ENCODE measurements at regions of chr17 and their contacts with region 1.

Region 1: DNA sequence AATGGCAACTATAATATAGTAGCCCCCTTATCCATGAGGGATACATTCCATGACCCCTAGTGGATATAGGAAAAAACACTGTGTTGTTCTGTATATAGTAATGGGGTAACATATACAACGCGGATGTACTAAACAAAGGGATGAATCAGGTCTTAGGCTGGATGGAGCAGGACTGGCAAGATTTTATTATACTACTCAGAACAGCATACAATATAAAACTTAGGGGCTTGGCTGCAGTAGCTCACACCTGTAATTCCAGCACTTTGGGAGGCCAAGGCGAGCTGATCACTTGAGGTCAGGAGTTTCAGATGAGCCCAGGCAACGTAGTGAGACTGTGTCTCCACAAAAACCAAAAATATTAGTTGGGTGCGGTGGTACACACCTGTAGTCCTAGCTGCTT is 26.8 kb downstream of the VMP1 start:
- DNase-seq: no peak
- ATAC-seq: no peak
- H3K4me3 Mint-ChIP-seq: no peak overlapping the region
- H3K27ac Mint-ChIP-seq: no peak overlapping the region
- H3K4me1 Mint-ChIP-seq: peaks cover 10% of the 10 kb centered on the region
- H3K27me3 Mint-ChIP-seq: no peaks in the 10 kb centered on the region
- CTCF ChIP-seq: no peak

Region 2: DNA sequence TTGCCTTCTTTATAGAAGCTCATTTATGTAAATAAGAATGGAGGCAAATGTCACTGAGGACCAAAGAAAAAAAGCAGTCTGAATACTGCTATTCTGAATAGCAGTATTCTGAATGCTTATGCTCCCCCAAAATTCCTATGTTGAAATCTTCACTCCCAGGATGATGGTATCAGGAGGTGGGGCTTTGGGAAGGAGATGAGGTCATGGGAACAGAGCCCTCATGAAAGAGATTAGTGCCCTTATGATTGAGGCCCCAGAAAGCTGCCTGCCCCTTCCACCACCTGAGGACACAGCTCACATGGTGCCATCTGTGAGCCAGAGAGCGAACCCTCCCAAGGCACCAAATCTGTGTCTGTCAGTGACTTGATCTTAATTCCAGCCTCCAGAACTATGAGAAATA is 315.7 kb after region 1 on chr17:
- CTCF ChIA-PET with region 1: no interaction called
- POLR2A ChIA-PET with region 1: no interaction called
- intact Hi-C with region 1: loop called (anchors 10 kb)
- DNase-seq: no peak
- ATAC-seq: no peak
- H3K4me3 Mint-ChIP-seq: no peak overlapping the region
- H3K27ac Mint-ChIP-seq: no peak overlapping the region
- H3K4me1 Mint-ChIP-seq: no peaks in the 10 kb centered on the region
- H3K27me3 Mint-ChIP-seq: no peaks in the 10 kb centered on the region
- CTCF ChIP-seq: no peak